Psoas muscle (tissue), 8 donors: ENCODE measurements at regions of chr6 and their contacts with region 1.

Region 1: GRCh38 chr6:36196880-36197548 is 470 bp downstream of the BRPF3 start:
- DNase-seq: peak; percentile 99
- ATAC-seq: peak; percentile 97 to 98 (median 98)
- H3K4me3 ChIP-seq: peak overlapping the region; percentile 78
- H3K27ac ChIP-seq: peak overlapping the region; percentile 93
- H3K4me1 ChIP-seq: peaks cover 18% of the 10 kb centered on the region
- H3K27me3 ChIP-seq: no peaks in the 10 kb centered on the region
- CTCF ChIP-seq: no peak

Region 2: GRCh38 chr6:36027501-36028087 is 169.4 kb before region 1 on chr6 and contains the start of gene MAPK14:
- intact Hi-C with region 1: loop called (anchors 2 to 5 kb)
- DNase-seq: peak; percentile 99
- ATAC-seq: peak; percentile 95 to 96 (median 96)
- H3K4me3 ChIP-seq: peak within 1 kb of the TSS; percentile 90
- H3K27ac ChIP-seq: peak within 1 kb of the TSS; percentile 93
- H3K4me1 ChIP-seq: peaks cover 16% of the 10 kb centered on the region
- H3K27me3 ChIP-seq: no peaks in the 10 kb centered on the region
- CTCF ChIP-seq: peak; percentile 89
- total RNA-seq, gene MAPK14: 23.9 to 32.8 (median 31.4) TPM

Region 3: GRCh38 chr6:36123257-36124139 is 73.5 kb before region 1 on chr6:
- intact Hi-C with region 1: loop called (anchors 2 to 5 kb)
- DNase-seq: peak; percentile 82 to 91
- ATAC-seq: peak; percentile 80 to 91 (median 86)
- H3K4me3 ChIP-seq: no peak overlapping the region
- H3K27ac ChIP-seq: no peak overlapping the region
- H3K4me1 ChIP-seq: peaks cover 4% of the 10 kb centered on the region
- H3K27me3 ChIP-seq: no peaks in the 10 kb centered on the region
- CTCF ChIP-seq: peak; percentile 57

Region 4: GRCh38 chr6:36139991-36140710 is 56.9 kb before region 1 on chr6:
- intact Hi-C with region 1: loop called in 1 of 2 experiments (anchors 5 kb)
- DNase-seq: no peak
- ATAC-seq: peak; percentile 63 to 94 (median 90)
- H3K4me3 ChIP-seq: no peak overlapping the region
- H3K27ac ChIP-seq: peak overlapping the region; percentile 79
- H3K4me1 ChIP-seq: peaks cover 14% of the 10 kb centered on the region
- H3K27me3 ChIP-seq: no peaks in the 10 kb centered on the region
- CTCF ChIP-seq: no peak